MCF 10A (cell line): ENCODE measurements at regions of chr19 and their contacts with region 1.

Region 1: GRCh38 chr19:34974646-34975045 is 10.6 kb upstream of the ZNF792 start:
- DNase-seq: peak; percentile 32
- H3K4me3 Mint-ChIP-seq: no peak overlapping the region
- H3K27ac Mint-ChIP-seq: no peak overlapping the region
- H3K4me1 Mint-ChIP-seq: peaks cover 5% of the 10 kb centered on the region
- H3K27me3 Mint-ChIP-seq: peaks cover 10% of the 10 kb centered on the region
- CTCF ChIP-seq: no peak

Region 2: DNA sequence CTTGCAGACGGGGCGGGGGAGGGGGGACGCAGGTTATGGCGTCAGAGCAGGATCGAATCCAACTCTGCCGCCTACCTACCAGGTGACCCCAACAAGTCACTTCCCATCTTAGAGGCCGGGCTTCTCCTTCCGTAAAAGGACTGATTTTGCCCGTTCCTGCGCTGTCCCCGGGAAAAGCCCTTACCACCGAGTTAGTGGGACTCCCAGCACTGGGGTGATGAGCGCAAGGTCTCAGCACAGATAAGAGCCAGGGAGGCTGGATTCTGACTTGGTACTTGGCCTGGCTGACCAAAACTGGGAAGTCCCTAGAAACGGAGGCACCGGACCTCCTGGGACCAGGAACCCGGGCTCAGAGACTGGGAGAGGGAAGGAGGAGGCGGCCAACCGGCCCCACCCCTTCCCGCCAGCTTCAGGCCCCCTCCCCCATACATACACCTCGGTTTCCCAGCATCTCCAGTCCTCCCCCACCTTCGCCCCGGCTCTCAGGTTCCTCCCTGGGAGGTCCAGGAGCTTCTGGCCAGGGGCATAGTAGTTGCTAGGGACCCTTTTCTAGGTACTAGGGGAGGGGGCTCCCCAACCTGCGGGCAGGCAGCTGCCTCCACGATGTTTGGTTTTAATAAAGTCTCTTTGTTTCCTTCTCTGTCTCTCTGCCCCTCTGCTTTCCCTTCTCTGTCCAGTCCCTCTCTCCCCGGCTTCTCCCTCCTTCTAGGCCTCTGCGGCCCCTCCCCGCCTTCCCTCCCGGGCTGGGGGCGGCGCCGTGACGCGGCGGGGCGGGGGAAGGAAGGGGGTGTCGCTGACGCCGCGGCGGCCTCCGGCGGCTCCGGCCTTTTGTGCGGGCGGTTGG is 25.1 kb after region 1 on chr19 and contains the start of gene GRAMD1A:
- CTCF ChIA-PET with region 1: interaction called, 16 read pairs
- POLR2A ChIA-PET with region 1: no interaction called
- intact Hi-C with region 1: loop called (anchors 1 kb)
- DNase-seq: peak; percentile 93
- H3K4me3 Mint-ChIP-seq: peak within 1 kb of the TSS; percentile 84
- H3K27ac Mint-ChIP-seq: peak within 1 kb of the TSS; percentile 86
- H3K4me1 Mint-ChIP-seq: peaks cover 29% of the 10 kb centered on the region
- H3K27me3 Mint-ChIP-seq: no peaks in the 10 kb centered on the region
- CTCF ChIP-seq: no peak
- total RNA-seq, gene GRAMD1A: 46.7 and 48.1 TPM in 2 replicates

Region 3: GRCh38 chr19:35013031-35013819 is 38.6 kb after region 1 on chr19:
- CTCF ChIA-PET with region 1: interaction called, 45 read pairs
- POLR2A ChIA-PET with region 1: interaction called, 3 read pairs
- intact Hi-C with region 1: loop called (anchors 1 kb)
- DNase-seq: peak; percentile 44
- H3K4me3 Mint-ChIP-seq: no peak overlapping the region
- H3K27ac Mint-ChIP-seq: no peak overlapping the region
- H3K4me1 Mint-ChIP-seq: no peaks in the 10 kb centered on the region
- H3K27me3 Mint-ChIP-seq: no peaks in the 10 kb centered on the region
- CTCF ChIP-seq: peak; percentile 85

Region 4: DNA sequence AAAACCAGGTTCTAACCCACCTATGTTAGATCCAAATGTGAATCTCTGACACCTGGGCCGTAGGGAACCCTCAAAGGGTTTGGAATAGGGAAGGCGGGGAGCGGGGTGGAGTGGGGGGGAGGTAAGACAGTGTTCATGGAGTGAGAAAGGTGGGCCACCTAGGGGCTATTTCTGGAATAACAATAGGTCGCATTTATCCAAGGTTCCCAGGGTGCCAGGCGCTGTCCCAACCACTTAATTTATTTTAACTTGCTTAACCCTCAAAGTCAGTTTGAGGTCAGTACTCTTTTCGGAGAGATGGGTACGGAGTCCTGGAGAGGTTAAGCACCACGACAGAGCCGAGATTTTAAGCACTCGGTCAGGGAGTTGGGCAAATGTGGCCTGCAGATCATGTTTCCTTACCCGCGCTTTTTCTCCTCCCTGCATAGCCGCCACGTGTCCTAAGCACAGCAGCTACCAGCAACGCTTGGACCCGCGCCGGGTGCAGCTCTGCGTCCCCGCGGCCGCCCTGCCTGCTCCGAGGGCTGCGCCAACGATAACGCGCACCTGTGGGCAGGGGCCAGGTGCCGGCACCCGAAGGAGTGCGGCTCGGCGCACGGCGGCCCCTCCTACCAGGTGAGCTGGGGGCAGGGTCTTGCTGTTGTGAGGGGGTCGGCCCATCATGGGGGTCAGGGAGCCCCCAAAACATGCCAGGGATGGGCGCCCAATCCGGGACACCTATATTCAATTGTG is 116.0 kb after region 1 on chr19:
- CTCF ChIA-PET with region 1: interaction called, 4 read pairs
- POLR2A ChIA-PET with region 1: no interaction called
- intact Hi-C with region 1: loop called (anchors 10 kb)
- DNase-seq: peak; percentile 73
- H3K4me3 Mint-ChIP-seq: no peak overlapping the region
- H3K27ac Mint-ChIP-seq: no peak overlapping the region
- H3K4me1 Mint-ChIP-seq: peaks cover 10% of the 10 kb centered on the region
- H3K27me3 Mint-ChIP-seq: no peaks in the 10 kb centered on the region
- CTCF ChIP-seq: peak; percentile 46

Region 5: GRCh38 chr19:35140962-35141637 is 166.5 kb after region 1 on chr19:
- CTCF ChIA-PET with region 1: interaction called, 5 read pairs
- POLR2A ChIA-PET with region 1: no interaction called
- intact Hi-C with region 1: loop called (anchors 1 kb)
- DNase-seq: peak; percentile 93
- H3K4me3 Mint-ChIP-seq: no peak overlapping the region
- H3K27ac Mint-ChIP-seq: no peak overlapping the region
- H3K4me1 Mint-ChIP-seq: peaks cover 15% of the 10 kb centered on the region
- H3K27me3 Mint-ChIP-seq: peaks cover 19% of the 10 kb centered on the region
- CTCF ChIP-seq: peak; percentile 57